Naive thymus-derived CD4-positive, alpha-beta T cell (primary cell): ENCODE measurements at regions of chrX and their contacts with region 1.

Region 1: DNA sequence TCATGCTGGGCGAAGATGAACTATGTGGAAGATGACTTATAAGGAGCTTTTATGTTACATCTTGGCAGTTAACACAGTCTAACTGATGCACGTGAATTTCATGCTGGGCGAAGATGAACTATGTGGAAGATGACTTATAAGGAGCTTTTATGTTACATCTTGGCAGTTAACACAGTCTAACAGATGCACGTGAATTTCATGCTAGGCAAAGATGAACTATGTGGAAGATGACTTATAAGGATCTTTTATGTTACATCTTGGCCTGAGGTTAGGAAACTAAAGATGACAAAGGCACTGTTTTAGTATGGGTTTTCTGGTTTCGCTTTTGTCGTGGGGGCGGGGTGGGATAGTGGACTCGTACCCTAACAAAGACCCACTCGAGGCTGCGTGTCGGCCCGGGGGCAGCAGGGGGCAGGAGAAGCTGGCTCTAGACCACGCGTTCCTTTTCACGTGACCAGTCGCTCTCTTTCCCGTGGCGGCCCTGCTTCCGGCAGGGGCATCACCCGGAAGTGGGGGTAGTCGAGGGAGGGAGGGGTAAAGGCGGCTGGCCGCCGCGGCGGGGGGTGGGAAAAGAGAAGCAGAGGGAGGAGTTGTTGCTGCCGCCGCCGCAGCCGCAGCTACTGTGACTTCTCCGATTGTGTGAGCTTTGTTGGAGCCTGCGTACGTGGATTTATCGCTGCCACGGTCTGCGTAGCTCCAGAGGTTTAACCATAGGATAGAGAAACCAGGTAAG is at the start of gene ATP7A:
- DNase-seq: peak; percentile 62 to 94 (median 88)
- ATAC-seq: peak; percentile 97
- H3K4me3 ChIP-seq: peak within 1 kb of the TSS; percentile 98
- H3K4me3 Mint-ChIP-seq: peak within 1 kb of the TSS; percentile 91 to 100 (median 96)
- H3K27ac ChIP-seq: peak within 1 kb of the TSS; percentile 93
- H3K27ac Mint-ChIP-seq: peak within 1 kb of the TSS; percentile 94 to 99 (median 98)
- H3K4me1 ChIP-seq: peaks cover 3 to 10% of the 10 kb centered on the region in 2 donors
- H3K4me1 Mint-ChIP-seq: peaks cover 6 to 28% (median 16%) of the 10 kb centered on the region in 7 donors
- H3K27me3 ChIP-seq: no peaks in the 10 kb centered on the region
- H3K27me3 Mint-ChIP-seq: no peaks in the 10 kb centered on the region
- total RNA-seq, gene ATP7A: 10.9 to 17.4 (median 17.0) TPM

Region 2: GRCh38 chrX:77785486-77786364 is 124.5 kb before region 1 on chrX and contains the start of gene ATRX:
- CTCF ChIA-PET with region 1: no interaction called
- POLR2A ChIA-PET with region 1: no interaction called
- intact Hi-C with region 1: loop called in 1 of 2 experiments (anchors 5 kb)
- DNase-seq: peak; percentile 55 to 83 (median 79)
- ATAC-seq: peak; percentile 94
- H3K4me3 ChIP-seq: peak within 1 kb of the TSS; percentile 86
- H3K4me3 Mint-ChIP-seq: peak within 1 kb of the TSS; percentile 98 to 100 (median 100)
- H3K27ac ChIP-seq: peak within 1 kb of the TSS; percentile 93
- H3K27ac Mint-ChIP-seq: peak within 1 kb of the TSS; percentile 99 to 100 (median 100)
- H3K4me1 ChIP-seq: peaks cover 7 to 8% of the 10 kb centered on the region in 2 donors
- H3K4me1 Mint-ChIP-seq: peaks cover 0 to 46% (median 32%) of the 10 kb centered on the region in 7 donors
- H3K27me3 ChIP-seq: no peaks in the 10 kb centered on the region
- H3K27me3 Mint-ChIP-seq: no peaks in the 10 kb centered on the region
- total RNA-seq, gene ATRX: 90.1 to 126 (median 114) TPM

Region 3: GRCh38 chrX:78024349-78025108 is 114.3 kb after region 1 on chrX:
- CTCF ChIA-PET with region 1: interaction called, 7 read pairs
- POLR2A ChIA-PET with region 1: no interaction called
- intact Hi-C with region 1: loop called (anchors 1 kb)
- DNase-seq: peak in 7 of 9 donors; percentile 16 to 63 (median 59)
- ATAC-seq: peak; percentile 87
- H3K4me3 ChIP-seq: no peak overlapping the region
- H3K4me3 Mint-ChIP-seq: no peak overlapping the region
- H3K27ac ChIP-seq: no peak overlapping the region
- H3K27ac Mint-ChIP-seq: peak overlapping the region in 4 of 9 donors; percentile 5 to 42 (median 28)
- H3K4me1 ChIP-seq: no peaks in the 10 kb centered on the region
- H3K4me1 Mint-ChIP-seq: peaks cover 0 to 6% (median 5%) of the 10 kb centered on the region in 7 donors
- H3K27me3 ChIP-seq: no peaks in the 10 kb centered on the region
- H3K27me3 Mint-ChIP-seq: no peaks in the 10 kb centered on the region

Region 4: DNA sequence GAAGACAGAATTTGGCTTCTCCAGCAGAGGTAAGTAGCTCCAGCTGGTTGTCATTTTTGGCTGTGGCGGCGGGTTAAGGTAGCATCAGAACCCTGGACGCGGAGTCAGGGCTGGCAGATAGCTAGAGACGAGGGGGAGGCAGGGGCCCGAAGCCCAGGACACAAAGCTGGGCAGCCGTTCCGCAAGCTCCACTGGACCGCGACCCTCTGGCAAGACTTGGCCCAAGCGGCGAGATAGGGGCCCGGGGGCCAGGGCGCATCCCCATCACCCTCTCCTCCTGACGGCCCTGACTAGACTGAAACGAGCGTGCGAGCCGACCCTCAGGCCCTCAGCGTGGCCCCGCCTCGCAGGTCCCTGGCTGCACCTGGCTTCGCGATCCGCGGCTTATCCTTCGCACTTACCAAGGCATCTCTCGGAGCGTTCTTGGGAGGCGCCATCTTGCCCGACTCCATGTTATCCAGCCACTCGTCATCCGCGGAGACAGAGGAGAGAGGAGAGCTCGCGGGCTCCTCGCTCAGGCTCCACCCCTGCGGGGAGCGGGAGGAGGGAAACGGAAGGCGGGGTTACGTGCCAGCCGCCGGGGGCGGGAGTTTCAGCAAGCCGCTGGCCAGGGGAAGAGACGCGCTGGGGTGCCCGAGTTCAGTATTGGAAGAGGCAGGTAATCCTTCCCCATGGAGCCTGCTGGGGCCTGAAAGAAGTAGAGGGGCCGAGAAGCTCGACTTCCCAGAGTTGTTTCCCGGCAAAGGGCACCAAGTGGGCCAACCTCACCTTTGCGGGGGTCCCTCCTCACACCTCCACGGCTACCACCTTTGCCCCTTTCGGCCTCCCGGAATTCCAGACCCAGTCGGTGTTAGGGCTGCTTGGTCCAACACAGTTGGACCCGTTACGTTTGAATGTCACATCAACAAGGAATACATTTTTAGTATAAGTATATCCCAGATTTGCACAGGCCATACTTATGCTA is 229.2 kb after region 1 on chrX and contains the start of gene TAF9B:
- CTCF ChIA-PET with region 1: no interaction called
- POLR2A ChIA-PET with region 1: no interaction called
- intact Hi-C with region 1: loop called in 1 of 2 experiments (anchors 1 kb)
- DNase-seq: peak; percentile 57 to 84 (median 80)
- ATAC-seq: peak; percentile 99
- H3K4me3 ChIP-seq: peak within 1 kb of the TSS; percentile 77
- H3K4me3 Mint-ChIP-seq: peak within 1 kb of the TSS; percentile 88 to 95 (median 92)
- H3K27ac ChIP-seq: peak within 1 kb of the TSS; percentile 82
- H3K27ac Mint-ChIP-seq: peak within 1 kb of the TSS; percentile 81 to 95 (median 93)
- H3K4me1 ChIP-seq: no peaks in the 10 kb centered on the region
- H3K4me1 Mint-ChIP-seq: peaks cover 0 to 11% (median 5%) of the 10 kb centered on the region in 7 donors
- H3K27me3 ChIP-seq: no peaks in the 10 kb centered on the region
- H3K27me3 Mint-ChIP-seq: no peaks in the 10 kb centered on the region
- total RNA-seq, gene TAF9B: 10.4 to 19.9 (median 18.9) TPM

Region 5: DNA sequence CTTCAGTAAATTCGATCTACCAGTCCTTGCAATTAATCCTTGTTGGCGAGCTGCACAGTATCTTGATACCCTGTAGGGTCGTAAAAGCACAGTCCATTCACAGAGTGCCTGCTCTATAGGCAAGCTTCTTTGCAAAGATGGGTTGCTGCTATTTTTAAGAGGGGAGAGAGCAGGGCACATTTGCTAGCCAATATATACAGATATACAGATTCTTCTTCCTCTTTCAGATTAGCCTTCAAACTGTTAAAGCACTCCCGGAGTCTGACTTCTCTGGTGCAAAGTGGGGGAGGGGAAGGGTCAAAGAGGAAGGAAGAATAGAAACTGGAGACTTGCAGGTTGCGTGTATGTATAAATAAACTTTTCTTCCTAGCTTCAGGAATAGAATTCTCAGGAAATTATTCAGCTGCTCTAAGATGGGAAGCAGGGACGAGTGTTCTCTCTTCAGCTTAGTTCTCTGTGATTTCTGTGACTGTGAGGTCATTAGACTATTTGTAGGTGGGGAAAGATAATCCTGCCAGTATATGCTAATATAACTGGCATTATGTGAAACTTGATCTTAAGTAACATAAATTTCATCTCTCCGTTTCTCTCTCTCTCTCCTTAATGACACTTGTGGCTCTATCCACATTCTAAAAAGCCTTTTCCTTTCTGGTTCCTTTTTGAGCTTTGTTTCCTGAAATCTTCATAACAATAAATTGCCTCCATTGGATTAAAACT is 417.3 kb after region 1 on chrX and contains the start of gene CYSLTR1:
- CTCF ChIA-PET with region 1: no interaction called
- POLR2A ChIA-PET with region 1: no interaction called
- intact Hi-C with region 1: loop called (anchors 5 kb)
- DNase-seq: no peak
- ATAC-seq: peak; percentile 44
- H3K4me3 ChIP-seq: peak within 1 kb of the TSS; percentile 47
- H3K4me3 Mint-ChIP-seq: peak within 1 kb of the TSS; percentile 78 to 97 (median 88)
- H3K27ac ChIP-seq: peak within 1 kb of the TSS; percentile 84
- H3K27ac Mint-ChIP-seq: peak within 1 kb of the TSS; percentile 82 to 99 (median 93)
- H3K4me1 ChIP-seq: peaks cover 9 to 23% of the 10 kb centered on the region in 2 donors
- H3K4me1 Mint-ChIP-seq: peaks cover 26 to 65% (median 62%) of the 10 kb centered on the region in 7 donors
- H3K27me3 ChIP-seq: no peaks in the 10 kb centered on the region
- H3K27me3 Mint-ChIP-seq: no peaks in the 10 kb centered on the region
- total RNA-seq, gene CYSLTR1: 13.7 to 71.9 (median 24.9) TPM

Region 6: DNA sequence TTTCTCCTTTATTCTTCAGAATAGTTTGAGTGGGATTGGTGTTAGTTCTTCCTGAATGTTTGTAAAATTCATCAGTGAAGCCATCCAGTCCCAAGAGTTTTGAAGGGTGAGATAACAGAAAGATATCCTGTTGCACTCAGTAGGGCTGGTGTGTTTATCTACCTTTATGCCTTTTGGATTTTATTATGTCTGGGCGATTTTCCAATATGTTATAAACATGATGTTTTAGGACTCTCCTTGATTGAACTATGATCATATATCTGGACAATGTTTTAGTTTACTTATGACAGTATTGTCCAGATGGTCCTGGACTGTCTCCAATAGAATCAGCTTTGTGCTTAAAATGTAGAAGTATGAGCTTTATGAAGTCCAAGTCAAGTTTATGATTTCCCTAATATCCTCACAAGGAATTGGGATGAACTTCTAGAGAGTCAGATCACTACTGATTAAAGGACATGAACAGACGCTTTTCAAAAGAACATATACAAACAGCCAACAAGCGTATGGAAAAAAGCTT is 1534.5 kb after region 1 on chrX:
- CTCF ChIA-PET with region 1: interaction called, 4 read pairs
- POLR2A ChIA-PET with region 1: no interaction called
- intact Hi-C with region 1: loop called in 1 of 2 experiments (anchors 10 kb)
- DNase-seq: no peak
- ATAC-seq: no peak
- H3K4me3 ChIP-seq: no peak overlapping the region
- H3K4me3 Mint-ChIP-seq: no peak overlapping the region
- H3K27ac ChIP-seq: no peak overlapping the region
- H3K27ac Mint-ChIP-seq: no peak overlapping the region
- H3K4me1 ChIP-seq: no peaks in the 10 kb centered on the region
- H3K4me1 Mint-ChIP-seq: no peaks in the 10 kb centered on the region
- H3K27me3 ChIP-seq: no peaks in the 10 kb centered on the region
- H3K27me3 Mint-ChIP-seq: no peaks in the 10 kb centered on the region